ENCODE measurements at regions of chr1 and their contacts with region 1.

Region 1: GRCh38 chr1:71068325-71069240 is 12.3 kb downstream of the ZRANB2 start:
- DNase-seq: no peak
- H3K4me3 ChIP-seq: no peak overlapping the region
- H3K27ac ChIP-seq: no peak overlapping the region
- H3K4me1 ChIP-seq: peaks cover 0 to 14% (median 0%) of the 10 kb centered on the region in 4 donors
- H3K27me3 ChIP-seq: no peaks in the 10 kb centered on the region
- CTCF ChIP-seq: no peak
- EP300 ChIP-seq: no peak
- POLR2A ChIP-seq: no peak

Region 2: GRCh38 chr1:70221241-70222121 is 847.1 kb before region 1 on chr1 and contains the start of gene SRSF11:
- in situ Hi-C with region 1: loop called (anchors 25 kb)
- intact Hi-C with region 1: loop called (anchors 10 kb)
- DNase-seq: peak; percentile 98
- H3K4me3 ChIP-seq: peak within 1 kb of the TSS; percentile 52 to 78 (median 74)
- H3K27ac ChIP-seq: peak within 1 kb of the TSS; percentile 94 to 99 (median 98)
- H3K4me1 ChIP-seq: peaks cover 14 to 39% (median 28%) of the 10 kb centered on the region in 4 donors
- H3K27me3 ChIP-seq: no peaks in the 10 kb centered on the region
- CTCF ChIP-seq: peak in 3 of 5 experiments; percentile 26 to 53 (median 30)
- EP300 ChIP-seq: no peak
- POLR2A ChIP-seq: peak; percentile 85
- total RNA-seq, gene SRSF11: 103 to 573 (median 189) TPM

Region 3: DNA sequence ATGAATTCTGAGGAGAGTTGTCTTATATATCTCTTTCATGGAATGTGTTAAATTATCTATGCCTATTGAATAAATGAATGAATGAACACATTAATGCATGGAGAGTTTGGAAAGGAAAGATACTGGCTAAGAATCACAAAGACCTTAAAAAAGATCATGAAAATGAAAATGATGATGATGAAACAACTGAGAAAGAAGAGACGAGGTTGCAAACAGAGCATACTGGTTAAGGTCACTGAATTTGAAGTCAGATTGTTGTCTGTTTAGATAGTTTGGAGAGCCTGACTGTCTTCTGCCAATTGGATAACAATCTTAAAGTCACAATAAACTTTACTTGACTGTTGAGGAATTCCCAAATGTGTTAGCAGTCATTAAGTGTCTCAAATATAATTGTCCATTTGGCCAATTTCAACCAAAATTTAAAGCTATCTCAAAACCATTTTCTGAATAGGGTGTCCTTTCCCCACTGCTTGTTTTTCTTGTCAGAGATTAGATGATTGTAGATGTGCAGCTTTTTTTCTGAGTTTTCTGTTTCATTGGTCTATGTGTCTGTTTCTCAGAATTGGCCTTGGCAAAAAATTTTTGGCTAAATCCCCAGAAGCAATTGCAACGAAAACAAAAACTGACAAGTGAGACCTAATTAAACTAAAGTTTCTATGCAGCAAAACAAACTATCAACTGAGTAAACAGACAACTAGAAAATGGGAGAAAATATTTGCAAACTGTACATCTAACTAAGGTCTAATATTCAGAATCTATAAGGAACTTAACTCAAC is 153.1 kb before region 1 on chr1:
- in situ Hi-C with region 1: no loop called
- intact Hi-C with region 1: no loop called
- DNase-seq: no peak
- H3K4me3 ChIP-seq: no peak overlapping the region
- H3K27ac ChIP-seq: no peak overlapping the region
- H3K4me1 ChIP-seq: no peaks in the 10 kb centered on the region
- H3K27me3 ChIP-seq: no peaks in the 10 kb centered on the region
- CTCF ChIP-seq: no peak
- EP300 ChIP-seq: no peak
- POLR2A ChIP-seq: no peak

Region 4: GRCh38 chr1:71190843-71191242 is 122.3 kb after region 1 on chr1:
- in situ Hi-C with region 1: no loop called
- intact Hi-C with region 1: no loop called
- DNase-seq: no peak
- H3K4me3 ChIP-seq: no peak overlapping the region
- H3K27ac ChIP-seq: no peak overlapping the region
- H3K4me1 ChIP-seq: peaks cover 0 to 6% (median 0%) of the 10 kb centered on the region in 4 donors
- H3K27me3 ChIP-seq: no peaks in the 10 kb centered on the region
- CTCF ChIP-seq: no peak
- EP300 ChIP-seq: no peak
- POLR2A ChIP-seq: no peak

Measured in transverse colon (tissue), 4 donors.